Common myeloid progenitor, CD34-positive (primary cell): ENCODE measurements at regions of chr17 and their contacts with region 1.

Region 1: DNA sequence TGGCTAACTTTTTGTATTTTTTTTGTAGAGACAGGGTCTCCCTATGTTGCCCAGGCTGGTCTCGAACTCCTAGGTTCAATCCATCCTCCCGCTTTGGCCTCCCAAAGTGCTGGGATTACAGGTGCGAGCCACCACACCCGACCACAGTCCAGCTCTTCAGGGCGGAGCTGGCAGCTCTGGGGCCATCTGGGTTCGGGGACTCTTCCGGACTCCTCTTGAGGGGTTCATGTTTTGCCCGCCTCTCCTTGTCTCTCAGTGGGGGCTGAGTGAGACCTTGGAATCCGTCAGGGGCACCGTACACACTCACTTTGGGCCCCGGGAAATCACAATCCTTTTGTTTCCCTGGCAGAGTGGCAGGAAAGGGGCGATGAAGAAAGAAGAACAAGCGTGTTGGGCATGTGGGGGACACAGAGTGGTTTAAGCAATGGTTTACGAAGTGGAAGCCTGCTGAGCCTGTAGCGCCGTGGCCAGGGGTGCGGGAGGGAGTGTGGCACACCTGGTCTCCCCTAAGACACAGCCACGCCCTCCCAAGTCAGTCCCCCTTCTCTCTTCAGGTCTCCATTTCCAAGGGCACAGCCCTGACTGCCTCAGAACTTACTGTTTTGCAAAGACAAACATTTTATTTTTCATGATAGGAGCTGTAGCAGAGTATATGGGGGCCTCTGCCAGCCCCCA is 26.1 kb downstream of the TNS4 start:
- DNase-seq: no peak
- H3K4me3 ChIP-seq: no peak overlapping the region
- H3K27ac ChIP-seq: no peak overlapping the region
- H3K4me1 ChIP-seq: peaks cover 0 to 12% (median 8%) of the 10 kb centered on the region in 4 experiments
- H3K27me3 ChIP-seq: peaks cover 0 to 2% (median 0%) of the 10 kb centered on the region in 5 experiments

Region 2: GRCh38 chr17:40443583-40444327 is 31.6 kb before region 1 on chr17:
- CTCF ChIA-PET with region 1: interaction called, 25 read pairs
- POLR2A ChIA-PET with region 1: no interaction called
- DNase-seq: peak; percentile 53 to 72 (median 68)
- H3K4me3 ChIP-seq: peak overlapping the region; percentile 6 to 68 (median 58)
- H3K27ac ChIP-seq: no peak overlapping the region
- H3K4me1 ChIP-seq: peaks cover 5 to 55% (median 48%) of the 10 kb centered on the region in 4 experiments
- H3K27me3 ChIP-seq: peaks cover 0 to 23% (median 0%) of the 10 kb centered on the region in 5 experiments

Region 3: DNA sequence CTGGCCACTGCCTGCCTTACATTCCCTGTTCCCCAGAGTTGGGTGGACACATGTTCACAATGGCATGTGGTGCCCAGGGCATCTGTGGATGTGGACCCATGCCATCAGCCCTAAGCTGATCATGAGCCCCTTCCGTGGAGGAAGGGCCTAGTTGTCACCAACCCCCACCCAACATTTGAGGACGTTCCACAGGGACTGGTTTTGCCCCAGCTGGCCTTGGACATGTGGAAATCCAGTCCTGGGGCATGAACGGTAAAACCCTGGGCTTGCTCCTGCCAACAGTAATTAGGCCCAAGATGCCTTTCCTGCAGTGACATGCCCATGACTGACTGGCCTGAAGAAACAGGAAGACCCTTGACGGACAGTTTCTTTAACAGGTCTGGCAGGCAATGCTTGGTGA is 18.3 kb after region 1 on chr17:
- CTCF ChIA-PET with region 1: interaction called, 14 read pairs
- POLR2A ChIA-PET with region 1: no interaction called
- DNase-seq: no peak
- H3K4me3 ChIP-seq: no peak overlapping the region
- H3K27ac ChIP-seq: no peak overlapping the region
- H3K4me1 ChIP-seq: peaks cover 0 to 12% (median 2%) of the 10 kb centered on the region in 4 experiments
- H3K27me3 ChIP-seq: peaks cover 0 to 3% (median 0%) of the 10 kb centered on the region in 5 experiments

Region 4: GRCh38 chr17:40598663-40599467 is 123.5 kb after region 1 on chr17:
- CTCF ChIA-PET with region 1: no interaction called
- POLR2A ChIA-PET with region 1: no interaction called
- DNase-seq: peak; percentile 49 to 75 (median 69)
- H3K4me3 ChIP-seq: no peak overlapping the region
- H3K27ac ChIP-seq: no peak overlapping the region
- H3K4me1 ChIP-seq: peaks cover 0 to 33% (median 15%) of the 10 kb centered on the region in 4 experiments
- H3K27me3 ChIP-seq: no peaks in the 10 kb centered on the region